ENCODE measurements at regions of chr19 and their contacts with region 1.

Region 1: DNA sequence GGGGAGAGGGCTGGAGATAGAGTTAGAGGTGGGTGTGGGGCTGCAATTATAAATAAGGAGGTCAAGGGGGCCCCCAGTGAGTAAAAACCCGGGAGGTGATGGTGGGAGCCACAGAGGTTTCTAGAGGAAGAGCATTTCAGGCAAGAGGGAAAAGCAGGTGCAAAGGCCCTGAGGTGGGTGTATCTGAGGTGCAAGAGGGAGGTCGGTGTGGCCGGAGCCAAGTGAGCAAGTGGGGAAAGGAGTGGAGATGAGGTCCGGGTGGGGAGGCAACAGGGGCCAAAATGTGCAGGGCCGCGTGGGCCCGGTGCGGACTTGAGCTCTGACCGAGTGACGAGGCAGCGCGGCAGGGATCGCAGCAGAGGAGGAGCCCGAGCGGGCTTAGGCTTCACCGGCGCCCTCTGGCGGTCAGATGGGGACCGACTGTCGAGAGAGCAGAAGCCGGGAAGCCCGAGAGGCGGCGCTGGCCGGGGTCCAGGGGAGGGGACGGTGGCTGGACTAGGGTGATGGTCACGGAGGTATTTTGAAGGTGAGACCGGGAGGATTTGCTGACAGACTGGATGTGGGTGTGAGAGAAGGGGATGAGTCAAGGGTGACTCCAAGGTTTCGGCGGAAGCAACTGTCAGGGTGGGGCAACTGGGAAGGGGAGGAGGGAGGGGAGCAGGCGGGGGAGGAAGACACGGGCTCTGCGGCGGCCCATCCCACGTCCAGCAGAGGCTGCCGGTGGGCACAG is 17.7 kb upstream of the SPACA4 start:
- DNase-seq: peak; percentile 94
- ATAC-seq: peak; percentile 85
- H3K4me3 ChIP-seq: no peak overlapping the region
- H3K27ac ChIP-seq: peak overlapping the region; percentile 32
- H3K4me1 ChIP-seq: peaks cover 8% of the 10 kb centered on the region; the same call in 1 of the 2 replicates
- H3K27me3 ChIP-seq: no peaks in the 10 kb centered on the region
- CTCF ChIP-seq: peak; percentile 81

Region 2: GRCh38 chr19:48492925-48493717 is 95.7 kb before region 1 on chr19:
- CTCF ChIA-PET with region 1: interaction called, 17 read pairs
- POLR2A ChIA-PET with region 1: no interaction called
- intact Hi-C with region 1: no loop called
- DNase-seq: peak; percentile 94
- ATAC-seq: peak; percentile 79
- H3K4me3 ChIP-seq: peak overlapping the region; percentile 70
- H3K27ac ChIP-seq: no peak overlapping the region
- H3K4me1 ChIP-seq: peaks cover 13% of the 10 kb centered on the region
- H3K27me3 ChIP-seq: no peaks in the 10 kb centered on the region
- CTCF ChIP-seq: no peak

Region 3: DNA sequence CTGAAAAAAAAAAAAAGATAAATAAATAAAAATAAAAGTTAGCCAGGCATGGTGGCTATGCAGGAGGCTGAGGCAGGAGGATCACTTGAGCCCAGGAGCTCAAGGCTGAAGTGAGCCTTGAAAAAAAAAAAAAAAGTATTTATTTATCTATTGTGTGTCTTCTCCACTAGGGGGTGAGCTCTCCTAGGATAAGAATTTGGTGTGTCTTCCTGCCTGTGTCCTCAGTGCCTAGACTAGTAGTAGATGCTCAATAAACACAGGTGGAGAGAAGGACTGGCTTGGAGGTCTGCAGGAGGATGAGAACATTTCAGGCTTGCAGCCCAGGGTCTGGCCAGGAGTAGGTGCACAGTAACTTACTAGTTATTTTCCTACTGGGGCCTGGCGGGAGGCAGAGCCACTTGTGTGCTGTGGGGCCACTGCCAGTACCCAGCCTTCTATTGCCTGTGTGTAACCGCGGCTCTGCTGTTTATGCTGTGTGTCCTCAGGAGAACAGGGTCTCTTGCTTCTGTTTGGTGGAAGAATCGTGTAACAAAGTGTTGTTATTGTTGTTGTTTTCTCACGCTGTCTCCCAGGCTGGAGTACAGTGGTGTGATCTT is 82.6 kb before region 1 on chr19:
- CTCF ChIA-PET with region 1: interaction called, 50 read pairs
- POLR2A ChIA-PET with region 1: interaction called, 6 read pairs
- intact Hi-C with region 1: no loop called
- DNase-seq: peak; percentile 50
- ATAC-seq: no peak
- H3K4me3 ChIP-seq: no peak overlapping the region
- H3K27ac ChIP-seq: no peak overlapping the region
- H3K4me1 ChIP-seq: peaks cover 6% of the 10 kb centered on the region
- H3K27me3 ChIP-seq: no peaks in the 10 kb centered on the region
- CTCF ChIP-seq: peak; percentile 62

Region 4: DNA sequence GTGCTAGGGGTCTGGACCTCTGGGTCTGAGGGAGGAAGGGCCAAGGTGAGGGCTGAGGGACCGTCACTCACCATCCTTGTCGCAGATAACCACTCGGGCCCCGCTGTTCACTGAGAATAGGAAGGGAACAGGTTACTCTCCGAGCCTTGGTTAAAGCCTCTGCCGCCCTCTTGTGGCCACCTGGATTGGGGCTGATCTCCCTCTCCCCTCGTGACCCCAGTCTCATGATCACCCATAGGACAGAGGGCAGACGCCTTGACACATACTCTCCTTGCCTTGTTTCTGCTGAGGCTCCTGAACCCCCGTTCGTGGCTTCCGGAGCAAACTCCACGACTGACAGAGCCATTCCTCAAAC is 246.9 kb after region 1 on chr19:
- CTCF ChIA-PET with region 1: no interaction called
- POLR2A ChIA-PET with region 1: no interaction called
- intact Hi-C with region 1: no loop called
- DNase-seq: peak; percentile 87
- ATAC-seq: peak; percentile 81
- H3K4me3 ChIP-seq: peak overlapping the region; percentile 69
- H3K27ac ChIP-seq: no peak overlapping the region
- H3K4me1 ChIP-seq: peaks cover 9% of the 10 kb centered on the region; the same call in 1 of the 2 replicates
- H3K27me3 ChIP-seq: no peaks in the 10 kb centered on the region
- CTCF ChIP-seq: peak; percentile 88

Measured in PC-3 (cell line).